Activated CD4-positive, alpha-beta T cell treated with anti-CD3 and anti-CD28 coated beads, Interleukin-2, amount 10 ng/mL, durations not matched to agents 7 days and 5 days (primary cell): ENCODE measurements at regions of chr20 and their contacts with region 1.

Region 1: GRCh38 chr20:50929299-50930138 is 1.7 kb downstream of the ADNP start:
- DNase-seq: peak; percentile 97
- H3K4me3 Mint-ChIP-seq: peak overlapping the region; percentile 97
- H3K27ac Mint-ChIP-seq: peak overlapping the region; percentile 98
- H3K4me1 Mint-ChIP-seq: peaks cover 54% of the 10 kb centered on the region
- H3K27me3 Mint-ChIP-seq: no peaks in the 10 kb centered on the region

Region 2: GRCh38 chr20:50891138-50891537 is 38.4 kb before region 1 on chr20:
- CTCF ChIA-PET with region 1: interaction called, 20 read pairs
- POLR2A ChIA-PET with region 1: no interaction called
- DNase-seq: no peak
- H3K4me3 Mint-ChIP-seq: no peak overlapping the region
- H3K27ac Mint-ChIP-seq: no peak overlapping the region
- H3K4me1 Mint-ChIP-seq: peaks cover 5% of the 10 kb centered on the region
- H3K27me3 Mint-ChIP-seq: no peaks in the 10 kb centered on the region

Region 3: DNA sequence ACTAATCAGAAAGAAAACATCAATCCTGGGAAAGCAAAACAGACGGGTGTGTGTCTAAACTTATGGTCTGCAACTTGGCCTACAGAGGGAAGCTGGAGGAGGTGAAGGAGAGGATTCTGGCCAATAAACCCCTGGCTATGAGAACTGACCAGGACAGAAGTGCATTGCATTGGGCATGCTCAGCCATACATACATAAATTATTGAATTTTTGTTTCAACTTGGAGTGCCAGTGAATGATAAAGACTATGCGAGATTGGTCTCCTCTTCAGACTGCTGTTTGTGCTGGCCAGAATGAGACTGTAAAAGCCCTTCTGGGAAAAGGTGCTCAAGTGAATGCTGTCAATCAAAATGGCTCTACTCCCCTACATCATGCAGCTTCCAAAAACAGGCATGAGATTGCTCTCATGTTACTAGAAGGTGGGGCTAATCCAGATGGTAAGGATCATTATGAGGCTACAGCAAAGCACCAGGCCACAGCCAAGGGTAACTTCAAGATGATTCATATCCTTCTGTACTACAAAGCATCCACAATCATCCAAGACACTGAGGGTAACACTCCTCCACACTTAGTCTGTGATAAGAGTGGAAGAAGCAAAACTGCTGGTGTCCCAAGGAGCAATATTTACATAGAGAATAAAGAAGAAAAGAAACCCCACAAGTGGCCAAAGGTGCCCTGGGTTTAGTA is 15.7 kb before region 1 on chr20:
- CTCF ChIA-PET with region 1: interaction called, 49 read pairs
- POLR2A ChIA-PET with region 1: no interaction called
- DNase-seq: no peak
- H3K4me3 Mint-ChIP-seq: no peak overlapping the region
- H3K27ac Mint-ChIP-seq: peak overlapping the region; percentile 21
- H3K4me1 Mint-ChIP-seq: peaks cover 61% of the 10 kb centered on the region
- H3K27me3 Mint-ChIP-seq: no peaks in the 10 kb centered on the region

Region 4: DNA sequence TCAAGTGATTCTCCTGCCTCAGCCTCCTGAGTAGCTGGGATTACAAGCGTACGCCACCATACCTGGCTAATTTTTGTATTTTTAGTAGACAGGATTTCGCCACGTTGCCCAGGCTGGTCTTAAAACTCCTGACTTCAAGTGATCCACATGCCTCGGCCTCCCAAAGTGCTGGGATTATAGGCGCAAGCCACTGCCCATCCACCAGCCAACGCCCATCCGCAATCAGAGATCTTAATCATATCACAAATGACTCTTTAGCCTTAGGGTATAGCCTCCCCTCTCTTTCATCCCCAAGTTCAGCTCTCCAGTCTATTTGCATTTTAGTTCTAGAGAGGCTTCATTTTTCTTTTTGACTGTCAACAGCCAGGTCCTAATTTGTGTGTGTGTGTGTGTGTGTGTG is 10.2 kb after region 1 on chr20:
- CTCF ChIA-PET with region 1: interaction called, 12 read pairs
- POLR2A ChIA-PET with region 1: no interaction called
- DNase-seq: no peak
- H3K4me3 Mint-ChIP-seq: no peak overlapping the region
- H3K27ac Mint-ChIP-seq: no peak overlapping the region
- H3K4me1 Mint-ChIP-seq: peaks cover 2% of the 10 kb centered on the region
- H3K27me3 Mint-ChIP-seq: no peaks in the 10 kb centered on the region

Region 5: DNA sequence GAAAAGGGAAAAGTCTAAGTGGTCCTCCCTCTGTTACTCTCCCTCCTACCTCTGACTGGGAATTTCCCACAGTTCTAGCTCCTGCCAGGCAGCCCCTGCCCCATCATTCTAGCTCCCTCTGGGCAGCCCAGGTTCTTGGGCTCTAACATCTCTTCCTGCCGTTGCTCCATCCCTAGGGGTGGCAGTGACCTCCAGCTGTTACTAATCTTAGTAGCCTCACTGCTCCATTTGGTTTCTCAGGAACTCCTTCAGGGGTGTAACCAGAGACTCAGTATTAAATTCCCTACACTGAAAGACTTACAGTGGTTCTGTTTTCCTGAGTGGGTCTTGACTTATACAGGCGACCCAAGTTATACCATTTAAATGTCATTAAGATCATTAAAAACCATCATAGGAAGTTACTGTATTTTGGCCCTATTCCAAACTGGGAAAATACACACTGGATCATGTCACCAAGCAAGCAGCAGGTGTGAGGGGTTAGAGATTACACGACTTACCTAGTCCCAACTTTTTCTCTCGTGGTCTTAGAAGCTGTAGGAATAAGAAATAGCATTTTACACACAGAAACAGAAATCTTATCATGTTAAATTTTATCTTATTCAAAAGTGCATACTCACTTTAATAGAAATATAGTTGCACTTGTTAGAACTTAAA is 18.7 kb after region 1 on chr20:
- CTCF ChIA-PET with region 1: interaction called, 14 read pairs
- POLR2A ChIA-PET with region 1: no interaction called
- DNase-seq: no peak
- H3K4me3 Mint-ChIP-seq: no peak overlapping the region
- H3K27ac Mint-ChIP-seq: no peak overlapping the region
- H3K4me1 Mint-ChIP-seq: peaks cover 4% of the 10 kb centered on the region
- H3K27me3 Mint-ChIP-seq: no peaks in the 10 kb centered on the region

Region 6: DNA sequence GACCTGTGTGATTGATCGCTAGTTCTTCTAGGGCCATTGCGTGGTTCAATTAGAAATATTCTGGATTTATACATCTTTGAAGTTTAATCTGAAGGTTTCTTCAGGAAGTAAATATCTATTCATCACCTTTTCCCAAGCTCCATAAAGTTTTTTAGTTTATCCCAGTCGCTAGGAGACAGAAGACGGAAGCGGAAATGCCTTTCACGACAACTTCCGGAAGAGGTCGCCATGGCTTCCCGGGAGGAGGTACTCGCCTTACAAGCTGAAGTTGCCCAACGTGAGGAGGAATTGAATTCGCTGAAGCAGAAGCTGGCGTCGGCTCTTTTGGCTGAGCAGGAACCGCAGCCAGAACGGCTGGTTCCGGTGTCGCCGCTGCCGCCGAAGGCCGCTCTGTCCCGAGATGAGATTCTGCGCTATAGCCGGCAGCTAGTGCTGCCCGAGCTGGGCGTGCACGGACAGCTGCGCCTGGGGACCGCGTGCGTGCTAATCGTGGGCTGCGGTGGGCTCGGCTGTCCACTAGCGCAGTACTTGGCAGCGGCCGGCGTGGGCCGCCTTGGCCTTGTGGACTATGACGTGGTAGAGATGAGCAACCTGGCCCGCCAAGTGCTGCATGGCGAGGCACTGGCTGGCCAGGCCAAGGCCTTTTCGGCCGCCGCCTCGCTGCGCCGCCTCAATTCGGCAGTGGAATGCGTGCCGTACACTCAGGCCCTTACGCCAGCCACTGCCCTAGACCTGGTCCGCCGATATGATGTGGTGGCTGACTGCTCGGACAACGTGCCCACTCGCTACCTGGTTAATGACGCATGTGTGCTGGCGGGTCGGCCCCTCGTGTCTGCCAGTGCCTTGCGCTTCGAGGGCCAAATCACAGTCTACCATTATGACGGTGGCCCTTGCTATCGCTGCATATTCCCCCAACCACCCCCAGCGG is 29.4 kb after region 1 on chr20 and contains the start of gene MOCS3:
- CTCF ChIA-PET with region 1: interaction called, 25 read pairs
- POLR2A ChIA-PET with region 1: interaction called, 3 read pairs
- DNase-seq: peak; percentile 91
- H3K4me3 Mint-ChIP-seq: peak within 1 kb of the TSS; percentile 87
- H3K27ac Mint-ChIP-seq: peak within 1 kb of the TSS; percentile 96
- H3K4me1 Mint-ChIP-seq: peaks cover 48% of the 10 kb centered on the region
- H3K27me3 Mint-ChIP-seq: no peaks in the 10 kb centered on the region
- total RNA-seq, gene MOCS3: 4.2 to 5.1 TPM

Region 7: DNA sequence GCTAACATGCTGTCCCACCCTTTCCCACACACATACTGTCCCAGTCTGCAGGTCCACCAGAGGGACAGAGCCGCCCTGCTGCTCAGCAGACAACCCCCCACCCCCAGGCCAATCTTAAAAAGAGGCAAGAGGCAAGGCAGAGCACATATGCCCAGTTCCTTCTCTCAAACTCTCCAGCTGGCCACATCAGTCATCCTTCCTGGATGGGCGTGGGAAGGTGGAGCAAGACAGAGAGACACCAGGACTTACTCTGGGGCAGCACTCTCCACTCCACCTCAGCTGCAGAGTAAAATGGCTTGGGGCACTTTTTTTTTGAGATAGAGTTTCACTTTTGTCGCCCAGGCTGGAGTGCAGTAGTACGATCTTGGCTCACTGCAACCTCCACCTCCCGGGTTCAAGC is 39.9 kb after region 1 on chr20:
- CTCF ChIA-PET with region 1: no interaction called
- POLR2A ChIA-PET with region 1: no interaction called
- DNase-seq: no peak
- H3K4me3 Mint-ChIP-seq: no peak overlapping the region
- H3K27ac Mint-ChIP-seq: no peak overlapping the region
- H3K4me1 Mint-ChIP-seq: no peaks in the 10 kb centered on the region
- H3K27me3 Mint-ChIP-seq: no peaks in the 10 kb centered on the region